H1 (cell line): ENCODE measurements at regions of chr3 and their contacts with region 1.

Region 1: GRCh38 chr3:49539659-49540560 is 14.4 kb upstream of the BSN start:
- DNase-seq: peak; percentile 87 to 99
- H3K4me3 ChIP-seq: peak overlapping the region; percentile 26 to 71 (median 60)
- H3K27ac ChIP-seq: no peak overlapping the region
- H3K4me1 ChIP-seq: peaks cover 0 to 21% (median 3%) of the 10 kb centered on the region in 4 experiments; a peak in 6 of 7 replicates
- H3K27me3 ChIP-seq: no peaks in the 10 kb centered on the region
- CTCF ChIP-seq: peak in 2 of 3 experiments; percentile 88 to 96; a peak in 3 of 4 replicates
- EP300 ChIP-seq: no peak
- POLR2A ChIP-seq: peak in 1 of 2 experiments; percentile 64; a peak in 2 of 3 replicates
- RAD21 ChIP-seq: peak; percentile 96

Region 2: GRCh38 chr3:49469936-49470713 is 69.8 kb before region 1 on chr3 and contains the start of gene DAG1:
- CTCF ChIA-PET with region 1: interaction called, 11 read pairs
- POLR2A ChIA-PET with region 1: interaction called, 8 read pairs
- DNase-seq: peak; percentile 87 to 98
- H3K4me3 ChIP-seq: peak within 1 kb of the TSS; percentile 74 to 94 (median 84)
- H3K27ac ChIP-seq: peak within 1 kb of the TSS; percentile 92
- H3K4me1 ChIP-seq: peaks cover 6 to 19% (median 13%) of the 10 kb centered on the region in 4 experiments
- H3K27me3 ChIP-seq: no peaks in the 10 kb centered on the region
- CTCF ChIP-seq: no peak
- EP300 ChIP-seq: no peak
- POLR2A ChIP-seq: peak; percentile 58 to 83
- RAD21 ChIP-seq: no peak
- total RNA-seq, gene DAG1: 137 and 138 TPM in 2 replicates

Region 3: GRCh38 chr3:49553692-49554632 is 14.1 kb after region 1 on chr3 and contains the start of gene BSN:
- CTCF ChIA-PET with region 1: interaction called, 70 read pairs
- POLR2A ChIA-PET with region 1: interaction called, 11 read pairs
- DNase-seq: peak; percentile 76 to 97
- H3K4me3 ChIP-seq: peak within 1 kb of the TSS; percentile 78 to 96 (median 90)
- H3K27ac ChIP-seq: peak within 1 kb of the TSS; percentile 27; the same call in 1 of the 2 replicates
- H3K4me1 ChIP-seq: peaks cover 0 to 14% (median 4%) of the 10 kb centered on the region in 4 experiments; a peak in 5 of 7 replicates
- H3K27me3 ChIP-seq: peaks cover 0 to 11% (median 6%) of the 10 kb centered on the region in 4 experiments; a peak in 3 of 7 replicates
- CTCF ChIP-seq: peak in 1 of 3 experiments; percentile 2; a peak in 1 of 4 replicates
- EP300 ChIP-seq: no peak
- POLR2A ChIP-seq: no peak
- RAD21 ChIP-seq: no peak
- total RNA-seq, gene BSN: 2.9 and 3.0 TPM in 2 replicates

Region 4: DNA sequence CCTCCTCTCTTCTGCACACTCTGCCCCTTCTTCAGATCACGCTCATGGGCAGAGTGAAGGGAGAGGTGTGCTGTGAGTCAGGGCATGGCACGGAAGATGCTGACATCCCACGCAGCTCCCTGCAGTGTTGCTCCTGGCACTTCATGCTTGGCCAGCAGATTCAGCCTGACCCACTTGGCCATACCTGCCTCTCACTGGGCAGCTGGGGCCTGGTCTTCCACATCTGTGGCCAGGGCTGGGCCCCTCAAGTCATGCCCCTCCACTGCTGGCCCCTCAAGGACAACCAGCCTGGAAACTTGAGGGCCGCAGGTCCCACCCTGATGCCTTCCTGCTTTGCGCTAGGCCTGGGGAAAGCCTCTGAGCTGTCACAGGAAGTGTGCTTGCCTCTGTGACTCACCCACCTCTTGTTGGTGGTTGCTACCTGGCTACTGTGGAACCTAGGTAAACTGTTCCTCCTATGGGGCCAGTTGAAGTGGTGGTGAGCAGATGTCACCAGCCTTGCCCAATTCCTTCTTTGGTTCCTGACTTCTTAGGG is 63.0 kb after region 1 on chr3:
- CTCF ChIA-PET with region 1: interaction called, 15 read pairs
- POLR2A ChIA-PET with region 1: no interaction called
- DNase-seq: no peak
- H3K4me3 ChIP-seq: no peak overlapping the region
- H3K27ac ChIP-seq: no peak overlapping the region
- H3K4me1 ChIP-seq: no peaks in the 10 kb centered on the region
- H3K27me3 ChIP-seq: no peaks in the 10 kb centered on the region; a peak in 1 of 7 replicates
- CTCF ChIP-seq: no peak
- EP300 ChIP-seq: no peak
- POLR2A ChIP-seq: no peak
- RAD21 ChIP-seq: no peak

Region 5: GRCh38 chr3:49666592-49666991 is 126.7 kb after region 1 on chr3:
- CTCF ChIA-PET with region 1: interaction called, 159 read pairs
- POLR2A ChIA-PET with region 1: interaction called, 21 read pairs
- DNase-seq: no peak
- H3K4me3 ChIP-seq: no peak overlapping the region
- H3K27ac ChIP-seq: no peak overlapping the region
- H3K4me1 ChIP-seq: peaks cover 0 to 8% (median under 1%) of the 10 kb centered on the region in 4 experiments; a peak in 1 of 7 replicates
- H3K27me3 ChIP-seq: no peaks in the 10 kb centered on the region
- CTCF ChIP-seq: no peak
- EP300 ChIP-seq: no peak
- POLR2A ChIP-seq: no peak
- RAD21 ChIP-seq: no peak

Region 6: DNA sequence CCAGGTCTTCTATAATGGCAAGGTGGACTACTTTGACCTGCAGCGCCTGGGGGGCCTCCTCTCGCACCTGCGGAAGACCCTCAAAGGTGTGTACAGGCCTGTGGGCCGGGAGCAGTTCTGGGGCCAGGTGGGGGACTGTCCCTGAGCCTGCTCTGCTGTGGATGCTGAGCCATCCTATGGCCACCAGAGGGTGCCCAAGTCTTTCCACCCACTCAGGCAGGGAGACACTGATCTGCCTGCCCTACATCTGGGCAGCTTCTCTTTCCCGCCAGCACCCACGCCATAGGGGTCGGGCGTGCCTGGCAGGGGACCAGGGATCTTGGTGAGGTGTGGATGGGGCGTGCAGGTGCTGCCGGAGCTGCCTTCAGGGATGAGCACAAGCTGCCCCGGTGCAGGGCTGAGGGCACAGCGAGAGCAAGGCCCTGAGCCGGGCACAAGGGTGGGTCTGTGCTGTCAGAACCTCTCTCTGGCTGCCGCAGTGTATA is 163.6 kb after region 1 on chr3:
- CTCF ChIA-PET with region 1: interaction called, 31 read pairs
- POLR2A ChIA-PET with region 1: no interaction called
- DNase-seq: peak in 1 of 2 experiments; percentile 76
- H3K4me3 ChIP-seq: no peak overlapping the region
- H3K27ac ChIP-seq: no peak overlapping the region
- H3K4me1 ChIP-seq: peaks cover 0 to 9% (median 5%) of the 10 kb centered on the region in 4 experiments; a peak in 5 of 7 replicates
- H3K27me3 ChIP-seq: no peaks in the 10 kb centered on the region
- CTCF ChIP-seq: peak in 2 of 3 experiments; percentile 87 to 97; a peak in 3 of 4 replicates
- EP300 ChIP-seq: no peak
- POLR2A ChIP-seq: no peak
- RAD21 ChIP-seq: peak; percentile 88 to 91